Aorta (tissue), 5 donors: ENCODE measurements at regions of chr17 and their contacts with region 1.

Region 1: GRCh38 chr17:28750178-28751047 is 6.6 kb downstream of the TRAF4 start:
- DNase-seq: peak; percentile 95 to 97
- ATAC-seq: peak; percentile 91
- H3K4me3 ChIP-seq: no peak overlapping the region
- H3K27ac ChIP-seq: no peak overlapping the region
- H3K4me1 ChIP-seq: no peaks in the 10 kb centered on the region
- H3K27me3 ChIP-seq: no peaks in the 10 kb centered on the region

Region 2: GRCh38 chr17:28563475-28563874 is 186.9 kb before region 1 on chr17:
- intact Hi-C with region 1: no loop called
- DNase-seq: peak in 1 of 2 donors; percentile 27
- ATAC-seq: no peak
- H3K4me3 ChIP-seq: no peak overlapping the region
- H3K27ac ChIP-seq: no peak overlapping the region
- H3K4me1 ChIP-seq: no peaks in the 10 kb centered on the region
- H3K27me3 ChIP-seq: no peaks in the 10 kb centered on the region

Region 3: GRCh38 chr17:28726226-28727130 is 23.9 kb before region 1 on chr17 and contains the start of gene TLCD1:
- intact Hi-C with region 1: loop called (anchors 1 kb)
- DNase-seq: peak; percentile 95 to 97
- ATAC-seq: peak; percentile 93
- H3K4me3 ChIP-seq: peak within 1 kb of the TSS; percentile 15 to 52
- H3K27ac ChIP-seq: peak within 1 kb of the TSS in 1 of 2 donors; percentile 20
- H3K4me1 ChIP-seq: no peaks in the 10 kb centered on the region
- H3K27me3 ChIP-seq: no peaks in the 10 kb centered on the region
- total RNA-seq, gene TLCD1: 0.90 to 2.5 TPM

Region 4: DNA sequence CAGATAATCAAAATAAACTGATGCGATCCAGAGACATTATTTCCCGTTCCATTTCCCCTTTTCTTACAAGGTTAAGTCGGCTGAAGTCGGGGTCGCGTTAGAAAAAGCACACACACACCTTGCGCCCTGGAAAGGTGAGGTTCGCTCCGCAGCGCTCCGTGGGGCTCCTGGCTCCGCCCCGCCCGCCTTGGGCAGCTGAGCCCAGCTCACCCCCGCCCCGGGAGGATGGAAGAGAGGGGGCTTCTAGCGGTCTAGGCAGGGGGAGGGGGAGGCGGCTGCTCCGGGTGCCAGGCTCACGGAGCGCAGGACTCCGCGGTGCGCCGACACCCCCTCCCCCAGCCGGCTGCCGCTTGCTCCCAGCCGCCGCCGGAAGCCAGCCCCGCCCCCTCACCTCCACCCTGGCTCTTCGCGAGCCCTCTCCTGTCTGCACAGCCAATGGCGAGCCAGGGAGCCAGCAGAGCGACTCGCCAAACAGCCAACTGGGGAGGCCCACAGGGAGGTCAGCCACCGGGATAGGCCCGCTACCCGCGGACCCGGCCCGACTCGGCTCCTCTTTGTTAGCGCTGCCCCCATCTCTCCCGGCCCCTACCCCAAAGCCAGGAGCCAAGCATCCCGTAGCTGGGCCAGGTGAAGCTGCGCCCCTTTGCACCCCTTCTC is 61.8 kb after region 1 on chr17:
- intact Hi-C with region 1: loop called in 1 of 2 experiments (anchors 2 kb)
- DNase-seq: peak; percentile 99
- ATAC-seq: peak; percentile 99
- H3K4me3 ChIP-seq: peak overlapping the region; percentile 97 to 99
- H3K27ac ChIP-seq: peak overlapping the region; percentile 28 to 87
- H3K4me1 ChIP-seq: peaks cover 0 to under 1% of the 10 kb centered on the region in 2 donors
- H3K27me3 ChIP-seq: no peaks in the 10 kb centered on the region